Aorta (tissue), 5 donors: ENCODE measurements at regions of chr17 and their contacts with region 1.

Region 1: GRCh38 chr17:1005361-1005946 is 8.5 kb downstream of the TIMM22 start:
- DNase-seq: peak; percentile 85 to 90
- ATAC-seq: peak; percentile 43
- H3K4me3 ChIP-seq: no peak overlapping the region
- H3K27ac ChIP-seq: peak overlapping the region; percentile 32 to 53
- H3K4me1 ChIP-seq: peaks cover 0 to 5% of the 10 kb centered on the region in 2 donors
- H3K27me3 ChIP-seq: no peaks in the 10 kb centered on the region

Region 2: GRCh38 chr17:1047177-1047878 is 41.9 kb after region 1 on chr17:
- intact Hi-C with region 1: loop called (anchors 2 to 5 kb)
- DNase-seq: peak; percentile 80 to 89
- ATAC-seq: peak; percentile 67
- H3K4me3 ChIP-seq: no peak overlapping the region
- H3K27ac ChIP-seq: peak overlapping the region; percentile 83 to 94
- H3K4me1 ChIP-seq: peaks cover 0 to 5% of the 10 kb centered on the region in 2 donors
- H3K27me3 ChIP-seq: no peaks in the 10 kb centered on the region

Region 3: GRCh38 chr17:1055751-1056645 is 50.5 kb after region 1 on chr17:
- intact Hi-C with region 1: loop called in 1 of 2 experiments (anchors 5 kb)
- DNase-seq: peak; percentile 76 to 84
- ATAC-seq: peak; percentile 86
- H3K4me3 ChIP-seq: no peak overlapping the region
- H3K27ac ChIP-seq: no peak overlapping the region
- H3K4me1 ChIP-seq: no peaks in the 10 kb centered on the region
- H3K27me3 ChIP-seq: no peaks in the 10 kb centered on the region

Region 4: DNA sequence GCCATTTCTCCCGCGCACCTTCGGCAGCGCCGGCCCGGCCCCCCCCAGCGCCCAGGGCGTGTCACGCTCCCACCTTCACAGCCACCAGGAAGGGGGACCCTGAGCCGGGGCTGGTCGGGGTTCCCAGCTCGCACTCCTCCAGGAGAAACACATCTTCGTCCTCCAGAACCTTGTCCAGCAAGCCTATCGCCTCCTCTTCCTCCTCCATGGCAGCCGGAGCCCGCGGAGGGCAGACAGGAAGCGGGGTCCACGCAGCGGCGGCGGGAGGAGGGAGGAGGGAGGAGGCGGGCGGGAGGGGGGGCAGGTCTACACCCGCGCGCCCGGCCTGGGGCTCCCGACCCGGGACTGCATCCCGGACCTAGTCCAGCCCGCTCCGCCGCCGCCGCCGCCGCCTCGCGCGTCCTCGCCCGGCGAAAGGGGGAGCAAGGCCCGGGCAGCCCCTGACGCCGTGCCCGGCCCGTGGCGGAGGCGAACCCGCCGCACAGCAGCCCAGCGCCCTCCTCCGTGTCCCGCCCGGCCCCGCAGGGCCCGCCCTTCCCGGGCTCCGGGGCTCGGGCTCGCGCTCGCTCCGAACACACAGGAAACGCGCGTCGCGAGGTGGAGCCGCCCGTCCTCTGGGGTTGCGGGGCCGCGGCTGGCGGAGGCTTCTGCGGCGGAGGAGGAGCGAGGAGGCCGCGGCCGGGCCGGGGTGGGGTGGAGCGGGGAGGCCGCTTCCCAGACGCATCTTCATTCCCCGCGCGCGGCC is 103.6 kb after region 1 on chr17:
- intact Hi-C with region 1: loop called in 1 of 2 experiments (anchors 10 kb)
- DNase-seq: peak; percentile 84 to 89
- ATAC-seq: peak; percentile 22
- H3K4me3 ChIP-seq: peak overlapping the region; percentile 66 to 88
- H3K27ac ChIP-seq: peak overlapping the region; percentile 70 to 92
- H3K4me1 ChIP-seq: peaks cover 0 to 4% of the 10 kb centered on the region in 2 donors
- H3K27me3 ChIP-seq: no peaks in the 10 kb centered on the region